Naive thymus-derived CD4-positive, alpha-beta T cell (primary cell): ENCODE measurements at regions of chr14 and their contacts with region 1.

Region 1: DNA sequence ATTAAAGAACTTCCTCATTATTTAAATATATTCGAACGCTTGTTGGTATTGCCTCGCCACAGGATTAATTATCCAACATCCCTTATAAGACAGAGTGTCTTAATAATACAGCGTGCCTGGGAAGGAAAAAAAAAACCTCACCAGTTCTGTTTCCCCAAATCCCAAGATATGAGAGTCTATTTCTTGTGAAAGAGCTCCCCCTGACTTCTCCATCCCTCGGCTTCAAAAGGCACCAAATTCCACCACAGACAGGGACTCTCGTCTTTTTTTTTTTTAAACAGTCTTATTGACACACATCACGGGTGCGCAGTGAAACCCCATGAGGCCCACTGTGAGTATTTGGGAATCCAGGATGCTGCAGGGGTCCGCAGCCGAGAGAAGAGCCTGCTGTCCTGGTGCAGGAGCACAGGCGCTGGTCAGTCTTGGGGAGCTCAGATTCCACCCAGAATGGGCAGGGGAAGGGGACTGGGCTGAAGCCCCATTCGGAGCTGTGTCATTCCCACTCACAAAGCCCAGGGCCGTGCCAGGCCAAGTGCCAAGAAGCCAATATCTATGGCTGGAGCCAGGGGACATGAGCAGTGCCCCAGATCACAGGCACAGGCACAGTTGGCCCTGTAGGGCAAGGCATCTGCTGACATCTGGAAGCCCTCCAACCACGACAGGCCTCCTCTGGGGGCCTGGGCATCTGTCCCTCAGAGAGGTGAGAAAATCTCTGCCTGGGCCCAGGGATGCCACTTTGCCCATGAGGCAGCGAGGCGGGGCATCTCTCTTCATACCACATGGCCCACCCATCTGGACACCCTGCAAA is 71.9 kb downstream of the BCL11B start:
- DNase-seq: no peak
- ATAC-seq: no peak
- H3K4me3 ChIP-seq: no peak overlapping the region
- H3K4me3 Mint-ChIP-seq: peak overlapping the region; percentile 26 to 94 (median 88)
- H3K27ac ChIP-seq: peak overlapping the region; percentile 85
- H3K27ac Mint-ChIP-seq: peak overlapping the region; percentile 65 to 100 (median 98)
- H3K4me1 ChIP-seq: peaks cover 88 to 100% of the 10 kb centered on the region in 2 donors
- H3K4me1 Mint-ChIP-seq: peaks cover 71 to 100% (median 99%) of the 10 kb centered on the region in 7 donors
- H3K27me3 ChIP-seq: no peaks in the 10 kb centered on the region
- H3K27me3 Mint-ChIP-seq: no peaks in the 10 kb centered on the region

Region 2: GRCh38 chr14:99186956-99187690 is 12.9 kb before region 1 on chr14:
- CTCF ChIA-PET with region 1: interaction called, 4 read pairs
- POLR2A ChIA-PET with region 1: interaction called, 2,458 read pairs
- intact Hi-C with region 1: loop called in 1 of 2 experiments (anchors 1 kb)
- DNase-seq: peak in 1 of 9 donors; percentile 41
- ATAC-seq: no peak
- H3K4me3 ChIP-seq: peak overlapping the region; percentile 49
- H3K4me3 Mint-ChIP-seq: peak overlapping the region; percentile 72 to 94 (median 86)
- H3K27ac ChIP-seq: peak overlapping the region; percentile 85
- H3K27ac Mint-ChIP-seq: peak overlapping the region; percentile 78 to 100 (median 94)
- H3K4me1 ChIP-seq: peaks cover 85 to 91% of the 10 kb centered on the region in 2 donors
- H3K4me1 Mint-ChIP-seq: peaks cover 66 to 97% (median 94%) of the 10 kb centered on the region in 7 donors
- H3K27me3 ChIP-seq: no peaks in the 10 kb centered on the region
- H3K27me3 Mint-ChIP-seq: no peaks in the 10 kb centered on the region

Region 3: GRCh38 chr14:99215277-99215676 is 15.2 kb after region 1 on chr14:
- CTCF ChIA-PET with region 1: interaction called, 8 read pairs
- POLR2A ChIA-PET with region 1: interaction called, 2,458 read pairs
- intact Hi-C with region 1: loop called in 1 of 2 experiments (anchors 1 kb)
- DNase-seq: peak in 1 of 9 donors; percentile 22
- ATAC-seq: no peak
- H3K4me3 ChIP-seq: peak overlapping the region; percentile 40
- H3K4me3 Mint-ChIP-seq: peak overlapping the region; percentile 79 to 94 (median 88)
- H3K27ac ChIP-seq: peak overlapping the region; percentile 64
- H3K27ac Mint-ChIP-seq: peak overlapping the region; percentile 86 to 100 (median 98)
- H3K4me1 ChIP-seq: peaks cover 82 to 94% of the 10 kb centered on the region in 2 donors
- H3K4me1 Mint-ChIP-seq: peaks cover 73 to 100% (median 93%) of the 10 kb centered on the region in 7 donors
- H3K27me3 ChIP-seq: no peaks in the 10 kb centered on the region
- H3K27me3 Mint-ChIP-seq: no peaks in the 10 kb centered on the region